ENCODE measurements at regions of chr12 and their contacts with region 1.

Region 1: GRCh38 chr12:23204933-23205778 is 580.2 kb downstream of the ETNK1 start:
- DNase-seq: peak; percentile 67
- ATAC-seq: peak; percentile 93
- H3K4me3 ChIP-seq: no peak overlapping the region
- H3K27ac ChIP-seq: no peak overlapping the region
- H3K4me1 ChIP-seq: no peaks in the 10 kb centered on the region
- H3K27me3 ChIP-seq: no peaks in the 10 kb centered on the region
- CTCF ChIP-seq: peak; percentile 78
- POLR2A ChIP-seq: no peak
- RAD21 ChIP-seq: peak; percentile 80

Region 2: GRCh38 chr12:22856178-22856577 is 349.0 kb before region 1 on chr12:
- CTCF ChIA-PET with region 1: no interaction called
- POLR2A ChIA-PET with region 1: no interaction called
- dilution Hi-C with region 1: no loop called
- in situ Hi-C with region 1: no loop called
- intact Hi-C with region 1: loop called (anchors 5 kb)
- DNase-seq: peak; percentile 45
- ATAC-seq: 0 out of 2 replicates have a peak, but pooled peaks have one; percentile 27
- H3K4me3 ChIP-seq: no peak overlapping the region
- H3K27ac ChIP-seq: no peak overlapping the region
- H3K4me1 ChIP-seq: no peaks in the 10 kb centered on the region
- H3K27me3 ChIP-seq: peaks cover 12% of the 10 kb centered on the region
- CTCF ChIP-seq: peak; percentile 70
- POLR2A ChIP-seq: no peak
- RAD21 ChIP-seq: peak; percentile 86

Region 3: DNA sequence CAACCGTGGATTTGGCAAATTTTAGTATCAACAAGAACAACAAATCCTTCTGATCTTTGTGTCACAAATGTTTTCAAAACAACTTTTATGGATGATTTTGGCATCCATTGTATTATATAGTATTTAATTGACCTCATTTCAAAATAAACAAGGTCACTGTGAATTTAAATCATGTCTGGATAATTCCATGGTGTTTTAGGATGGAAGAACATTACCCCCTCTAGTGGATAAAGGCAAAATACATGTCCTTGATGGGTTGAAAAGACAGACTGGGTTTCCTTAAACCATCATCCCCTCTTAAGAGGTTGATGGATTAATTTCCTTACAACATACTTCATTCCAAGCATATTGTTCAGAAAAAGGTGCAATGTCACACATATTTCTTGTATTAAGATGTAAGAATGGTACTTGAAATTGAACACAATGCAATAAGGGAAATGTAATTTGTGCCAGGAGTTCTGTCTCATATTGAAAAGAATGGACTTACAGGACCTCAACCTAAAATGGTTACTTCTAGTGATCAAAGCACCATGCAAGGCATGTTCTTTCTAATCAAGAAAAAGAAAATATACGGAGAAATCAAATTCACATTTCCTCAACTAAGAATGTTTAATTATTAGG is 1391.7 kb after region 1 on chr12:
- CTCF ChIA-PET with region 1: no interaction called
- POLR2A ChIA-PET with region 1: no interaction called
- dilution Hi-C with region 1: no loop called
- in situ Hi-C with region 1: no loop called
- intact Hi-C with region 1: loop called (anchors 10 kb)
- DNase-seq: peak; percentile 58
- ATAC-seq: peak; percentile 76
- H3K4me3 ChIP-seq: no peak overlapping the region
- H3K27ac ChIP-seq: no peak overlapping the region
- H3K4me1 ChIP-seq: no peaks in the 10 kb centered on the region; the same call in 1 of the 2 replicates
- H3K27me3 ChIP-seq: no peaks in the 10 kb centered on the region
- CTCF ChIP-seq: peak; percentile 70
- POLR2A ChIP-seq: no peak
- RAD21 ChIP-seq: peak; percentile 75

Region 4: GRCh38 chr12:24728366-24728765 is 1523.2 kb after region 1 on chr12:
- CTCF ChIA-PET with region 1: no interaction called
- POLR2A ChIA-PET with region 1: no interaction called
- dilution Hi-C with region 1: no loop called
- in situ Hi-C with region 1: no loop called
- intact Hi-C with region 1: loop called (anchors 5 kb)
- DNase-seq: peak; percentile 55
- ATAC-seq: peak; percentile 74
- H3K4me3 ChIP-seq: no peak overlapping the region
- H3K27ac ChIP-seq: no peak overlapping the region
- H3K4me1 ChIP-seq: no peaks in the 10 kb centered on the region; the same call in 1 of the 2 replicates
- H3K27me3 ChIP-seq: no peaks in the 10 kb centered on the region
- CTCF ChIP-seq: peak; percentile 71
- POLR2A ChIP-seq: no peak
- RAD21 ChIP-seq: peak; percentile 78

Region 5: GRCh38 chr12:24948757-24949722 is 1743.9 kb after region 1 on chr12 and contains the start of gene BCAT1:
- CTCF ChIA-PET with region 1: no interaction called
- POLR2A ChIA-PET with region 1: no interaction called
- dilution Hi-C with region 1: no loop called
- in situ Hi-C with region 1: no loop called
- intact Hi-C with region 1: loop called (anchors 10 kb)
- DNase-seq: peak; percentile 88
- ATAC-seq: peak; percentile 76
- H3K4me3 ChIP-seq: peak within 1 kb of the TSS; percentile 81
- H3K27ac ChIP-seq: peak within 1 kb of the TSS; percentile 97
- H3K4me1 ChIP-seq: peaks cover 10% of the 10 kb centered on the region
- H3K27me3 ChIP-seq: no peaks in the 10 kb centered on the region
- CTCF ChIP-seq: peak; percentile 25; the same call in 1 of the 2 replicates
- POLR2A ChIP-seq: peak; percentile 91
- RAD21 ChIP-seq: peak; percentile 22; the same call in 1 of the 2 replicates
- total RNA-seq, gene BCAT1: 580 and 683 TPM in 2 replicates

Region 6: DNA sequence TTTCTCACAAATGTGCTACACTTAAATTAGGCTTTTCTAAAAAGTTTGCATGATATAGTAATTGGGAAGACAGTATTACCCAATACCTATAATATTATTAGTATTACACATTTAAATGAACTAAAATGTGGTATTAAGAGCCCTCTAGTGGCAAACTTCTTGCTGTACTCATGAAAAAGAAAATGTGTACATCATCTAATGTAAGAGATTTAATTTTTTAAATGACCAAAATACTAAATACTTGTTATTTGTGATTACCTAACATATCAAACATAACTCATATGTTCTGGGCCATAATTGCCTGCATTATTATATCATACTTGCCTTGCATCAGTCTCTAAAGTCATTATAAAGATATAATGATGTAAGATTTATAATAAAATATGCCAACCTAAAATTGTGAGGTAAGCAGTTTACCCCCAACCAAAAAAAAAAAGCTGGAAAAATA is 1925.6 kb after region 1 on chr12:
- CTCF ChIA-PET with region 1: no interaction called
- POLR2A ChIA-PET with region 1: no interaction called
- dilution Hi-C with region 1: no loop called
- in situ Hi-C with region 1: loop called (anchors 25 kb)
- intact Hi-C with region 1: no loop called
- DNase-seq: peak; percentile 67
- ATAC-seq: peak; percentile 54
- H3K4me3 ChIP-seq: no peak overlapping the region
- H3K27ac ChIP-seq: no peak overlapping the region
- H3K4me1 ChIP-seq: peaks cover 2% of the 10 kb centered on the region
- H3K27me3 ChIP-seq: no peaks in the 10 kb centered on the region
- CTCF ChIP-seq: peak; percentile 75
- POLR2A ChIP-seq: no peak
- RAD21 ChIP-seq: peak; percentile 68

Measured in IMR-90 (cell line).